AG04450 (cell line): ENCODE measurements at regions of chr9 and their contacts with region 1.

Region 1: DNA sequence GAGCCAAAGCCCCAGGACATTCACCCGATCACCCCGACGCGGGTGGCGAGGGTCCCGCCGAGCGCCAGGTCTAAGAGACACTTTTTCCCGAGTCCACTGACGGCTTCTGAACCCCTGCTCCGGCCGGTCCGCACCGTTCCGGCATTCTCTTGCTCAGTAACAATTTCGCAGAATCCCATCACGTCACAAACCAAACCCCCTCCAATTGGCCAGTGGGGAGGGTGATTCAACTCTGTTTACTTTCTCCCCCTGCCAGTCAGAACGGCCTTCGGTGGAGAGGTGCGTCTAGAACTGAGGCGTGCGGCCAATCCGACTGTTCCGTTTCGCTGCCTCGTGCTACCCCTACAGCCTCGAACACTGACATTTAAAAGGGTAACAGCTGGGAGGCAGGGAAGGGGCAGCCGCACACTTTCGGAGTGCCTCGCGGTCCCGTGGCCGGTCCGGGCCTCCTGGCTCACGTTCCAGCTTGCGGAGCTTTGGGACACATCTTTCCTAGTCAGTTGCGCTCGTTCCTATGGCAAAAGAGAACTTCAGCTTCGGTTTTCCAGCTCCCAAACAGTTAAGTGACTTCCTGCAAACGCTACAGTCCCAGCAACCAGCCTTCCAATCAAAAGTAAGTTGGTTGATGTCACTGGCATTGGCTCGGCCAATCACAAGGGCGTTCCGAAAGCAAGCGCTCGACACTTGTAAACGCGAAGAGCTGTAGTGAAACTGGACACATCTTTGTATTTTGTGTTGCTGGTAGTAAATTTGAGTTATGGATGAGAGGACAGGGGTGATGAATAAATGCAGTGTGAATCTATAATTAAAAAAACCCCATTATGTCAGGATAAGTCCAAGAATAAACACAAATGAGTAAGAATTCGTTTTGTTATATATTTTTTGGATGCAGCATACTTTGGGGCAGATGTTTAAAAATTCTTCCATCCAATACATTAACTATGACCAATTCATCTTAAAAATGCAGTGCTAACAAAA is at the start of gene KLF9:
- DNase-seq: peak; percentile 92
- H3K4me3 ChIP-seq: peak within 1 kb of the TSS; percentile 98
- H3K27ac ChIP-seq: peak within 1 kb of the TSS; percentile 100
- H3K27me3 ChIP-seq: no peaks in the 10 kb centered on the region
- CTCF ChIP-seq: no peak
- polyA plus RNA-seq, gene KLF9: 13.2 and 14.9 TPM in 2 replicates

Region 2: GRCh38 chr9:70177121-70177520 is 237.0 kb before region 1 on chr9:
- CTCF ChIA-PET with region 1: no interaction called
- POLR2A ChIA-PET with region 1: no interaction called
- DNase-seq: no peak
- H3K4me3 ChIP-seq: no peak overlapping the region
- H3K27ac ChIP-seq: no peak overlapping the region
- H3K27me3 ChIP-seq: no peaks in the 10 kb centered on the region
- CTCF ChIP-seq: no peak

Region 3: GRCh38 chr9:70478963-70479641 is 65.0 kb after region 1 on chr9:
- CTCF ChIA-PET with region 1: interaction called, 9 read pairs
- POLR2A ChIA-PET with region 1: interaction called, 31 read pairs
- DNase-seq: no peak
- H3K4me3 ChIP-seq: no peak overlapping the region
- H3K27ac ChIP-seq: peak overlapping the region; percentile 71
- H3K27me3 ChIP-seq: no peaks in the 10 kb centered on the region
- CTCF ChIP-seq: no peak

Region 4: DNA sequence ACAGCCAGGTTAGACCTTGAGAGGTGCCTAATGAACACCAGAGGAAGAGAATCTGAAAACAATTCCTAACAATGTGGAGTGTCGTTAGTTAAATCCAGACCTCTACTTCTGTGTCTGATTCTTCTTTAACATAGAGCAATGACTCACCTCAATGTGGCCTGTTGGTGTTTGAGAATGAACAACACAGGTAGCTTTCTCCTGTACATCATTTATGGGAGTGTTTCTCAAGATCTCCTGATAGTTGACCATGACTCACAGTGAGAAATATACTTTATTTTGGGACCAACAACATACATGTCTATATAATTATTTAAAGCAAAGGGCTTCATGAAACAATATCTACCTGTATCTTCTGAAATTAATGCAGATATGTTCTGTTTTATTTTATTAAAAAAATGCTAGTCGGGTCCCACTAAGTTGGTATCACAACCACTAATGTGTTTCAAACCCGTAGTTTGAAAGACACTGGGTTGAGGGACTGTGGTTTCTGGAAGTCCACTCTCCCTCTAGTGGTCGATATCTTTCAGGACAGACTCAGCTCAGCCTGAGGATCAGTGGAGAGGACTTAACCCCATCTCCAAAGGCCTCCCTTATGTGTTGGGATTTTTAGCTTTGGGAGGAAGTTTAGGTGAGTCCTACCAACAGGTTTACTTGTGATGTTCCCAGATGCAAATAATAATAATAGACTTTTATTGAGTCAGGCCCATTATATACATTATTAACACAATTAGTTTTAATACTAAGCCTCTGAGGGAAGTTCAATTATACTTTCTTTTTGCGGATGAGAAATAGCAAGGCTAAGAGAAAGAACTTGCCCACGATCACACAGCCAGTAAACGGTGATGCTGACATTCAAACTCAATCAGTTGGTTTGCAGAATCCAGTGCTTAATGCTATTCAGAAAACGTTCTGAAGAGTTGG is 70.4 kb after region 1 on chr9:
- CTCF ChIA-PET with region 1: interaction called, 9 read pairs
- POLR2A ChIA-PET with region 1: interaction called, 31 read pairs
- DNase-seq: peak; percentile 43
- H3K4me3 ChIP-seq: no peak overlapping the region
- H3K27ac ChIP-seq: no peak overlapping the region
- H3K27me3 ChIP-seq: no peaks in the 10 kb centered on the region
- CTCF ChIP-seq: peak; percentile 87

Region 5: GRCh38 chr9:70574151-70574837 is 160.2 kb after region 1 on chr9:
- CTCF ChIA-PET with region 1: no interaction called
- POLR2A ChIA-PET with region 1: interaction called, 11 read pairs
- DNase-seq: no peak
- H3K4me3 ChIP-seq: no peak overlapping the region
- H3K27ac ChIP-seq: no peak overlapping the region
- H3K27me3 ChIP-seq: no peaks in the 10 kb centered on the region
- CTCF ChIP-seq: no peak